Activated CD4-positive, alpha-beta T cell treated with anti-CD3 and anti-CD28 coated beads for 36 hours (primary cell): ENCODE measurements at regions of chr17 and their contacts with region 1.

Region 1: DNA sequence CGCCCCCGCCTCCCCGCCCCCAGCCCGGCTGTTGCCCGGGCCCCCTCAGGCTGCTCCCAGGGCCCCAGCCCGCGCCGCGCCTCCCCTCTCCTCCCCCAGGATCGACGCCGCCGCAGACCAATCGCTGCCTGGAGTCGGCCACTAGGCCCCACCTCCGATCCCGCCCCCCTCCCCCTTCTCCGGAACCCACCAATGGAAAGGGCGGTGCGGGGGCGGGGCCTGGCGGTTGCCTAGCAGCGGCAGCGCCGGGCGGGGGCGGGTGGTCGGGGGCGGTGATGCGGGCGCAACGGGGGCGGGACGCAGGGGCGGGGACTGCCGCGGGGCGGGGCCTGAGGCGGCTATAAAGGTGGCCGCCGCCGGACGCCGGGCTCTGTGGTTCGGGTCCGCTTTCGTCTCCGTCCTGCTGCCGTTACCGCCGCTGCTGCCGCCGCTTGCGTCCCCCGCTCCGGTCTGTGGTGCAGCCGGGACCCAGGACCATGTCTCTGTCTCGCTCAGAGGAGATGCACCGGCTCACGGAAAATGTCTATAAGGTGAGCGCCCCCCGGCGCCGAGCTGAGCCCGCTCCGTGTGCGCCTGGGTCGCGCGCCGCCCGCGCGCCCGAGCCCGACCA is at the start of gene BAIAP2:
- DNase-seq: peak; percentile 99
- ATAC-seq: peak; percentile 91
- H3K4me3 Mint-ChIP-seq: peak within 1 kb of the TSS; percentile 72
- H3K27ac Mint-ChIP-seq: peak within 1 kb of the TSS; percentile 47
- H3K4me1 Mint-ChIP-seq: peaks cover 20% of the 10 kb centered on the region
- H3K27me3 Mint-ChIP-seq: peaks cover 19% of the 10 kb centered on the region
- total RNA-seq, gene BAIAP2: 4.6 to 5.0 TPM

Region 2: DNA sequence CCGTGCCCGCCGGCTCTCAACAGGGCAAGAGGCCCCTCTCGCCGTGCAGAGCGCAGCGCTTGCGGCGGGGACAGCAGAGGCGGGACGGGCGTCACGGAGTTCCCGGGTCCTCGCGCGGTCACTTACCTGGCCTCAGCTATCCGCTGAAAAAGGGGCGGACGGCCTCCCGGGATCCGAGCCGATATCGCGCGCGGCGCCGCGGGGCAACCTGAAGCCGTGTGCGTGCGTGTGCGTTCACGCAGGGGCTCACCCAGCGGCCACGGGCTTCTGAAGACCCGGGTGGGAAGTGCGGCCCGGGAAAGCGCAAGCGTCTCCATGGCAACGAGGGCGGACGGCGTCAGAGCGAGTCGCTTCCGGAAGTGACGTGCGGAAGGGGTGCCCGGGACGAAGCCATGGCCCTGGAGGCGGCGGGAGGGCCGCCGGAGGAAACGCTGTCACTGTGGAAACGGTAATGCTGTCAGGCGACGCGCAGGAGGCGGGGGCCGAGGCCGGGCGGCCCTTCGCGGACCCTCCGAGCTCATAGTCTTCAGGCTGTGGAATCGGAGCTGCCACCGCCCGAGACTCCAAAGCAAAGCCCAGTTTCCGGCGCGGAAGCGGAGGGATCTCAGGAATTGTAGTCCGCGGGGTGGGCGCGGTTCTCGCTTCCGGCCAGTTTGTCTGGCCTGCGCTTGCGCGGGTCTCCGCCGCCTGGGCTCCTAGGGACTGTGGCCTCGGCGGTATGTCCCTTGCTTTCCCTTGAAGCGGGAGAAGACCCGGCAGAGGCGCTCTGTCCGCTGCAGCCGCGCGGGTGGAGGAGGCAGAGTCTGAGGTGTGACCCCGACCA is 619.9 kb before region 1 on chr17 and contains the start of gene ENDOV:
- CTCF ChIA-PET with region 1: no interaction called
- POLR2A ChIA-PET with region 1: no interaction called
- intact Hi-C with region 1: loop called in 1 of 2 experiments (anchors 1 kb)
- DNase-seq: peak; percentile 95
- ATAC-seq: peak; percentile 96
- H3K4me3 Mint-ChIP-seq: peak within 1 kb of the TSS; percentile 81
- H3K27ac Mint-ChIP-seq: peak within 1 kb of the TSS; percentile 8
- H3K4me1 Mint-ChIP-seq: peaks cover 23% of the 10 kb centered on the region
- H3K27me3 Mint-ChIP-seq: peaks cover 16% of the 10 kb centered on the region
- total RNA-seq, gene ENDOV: 12.3 to 13.0 TPM

Region 3: DNA sequence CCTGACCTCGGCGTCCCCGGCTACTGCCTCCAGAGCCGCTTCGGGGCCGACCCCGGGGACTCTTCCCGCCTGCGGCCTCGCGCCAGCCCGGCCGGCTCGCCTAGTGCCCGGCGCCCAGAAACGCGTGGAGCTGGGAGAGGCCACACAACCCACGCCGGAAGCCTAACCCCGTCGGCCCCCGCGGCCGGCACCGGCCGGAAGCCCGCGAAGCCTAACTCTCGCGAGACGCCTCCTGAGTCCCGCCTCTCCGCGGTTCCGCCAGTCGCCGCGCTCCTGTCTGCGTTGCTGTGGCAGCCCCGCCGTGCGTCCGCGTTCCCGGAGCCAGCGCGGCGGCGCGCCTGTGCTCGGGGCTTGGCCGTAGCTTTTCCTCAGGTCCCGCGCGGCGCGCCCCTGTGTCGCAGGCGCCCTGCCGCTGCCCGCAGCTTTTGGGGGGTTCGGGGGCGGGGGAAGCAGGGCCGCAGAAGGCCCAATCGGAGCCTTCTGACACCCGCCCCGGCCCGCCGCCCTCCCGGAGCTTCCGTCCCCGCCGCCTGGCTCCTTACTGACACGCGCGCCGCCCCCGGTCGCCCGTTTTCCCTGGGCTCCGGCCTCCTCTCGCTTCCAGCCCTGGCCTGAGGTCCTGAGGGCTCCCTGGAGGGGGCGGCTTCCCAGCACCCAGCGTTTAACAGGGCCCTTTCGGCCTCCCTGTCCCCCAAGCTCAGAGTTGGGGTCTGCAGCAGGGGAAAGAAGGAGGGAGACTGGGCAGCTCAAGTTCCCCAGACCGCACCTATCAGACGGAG is 580.1 kb before region 1 on chr17:
- CTCF ChIA-PET with region 1: no interaction called
- POLR2A ChIA-PET with region 1: no interaction called
- intact Hi-C with region 1: loop called in 1 of 2 experiments (anchors 1 kb)
- DNase-seq: peak; percentile 98
- ATAC-seq: peak; percentile 93
- H3K4me3 Mint-ChIP-seq: peak overlapping the region; percentile 99
- H3K27ac Mint-ChIP-seq: peak overlapping the region; percentile 94
- H3K4me1 Mint-ChIP-seq: peaks cover 23% of the 10 kb centered on the region
- H3K27me3 Mint-ChIP-seq: peaks cover 13% of the 10 kb centered on the region

Region 4: GRCh38 chr17:80991645-80992076 is 43.2 kb before region 1 on chr17 and contains the start of gene CHMP6:
- CTCF ChIA-PET with region 1: no interaction called
- POLR2A ChIA-PET with region 1: no interaction called
- intact Hi-C with region 1: loop called in 1 of 2 experiments (anchors 2 kb)
- DNase-seq: peak; percentile 83
- ATAC-seq: peak; percentile 49
- H3K4me3 Mint-ChIP-seq: peak within 1 kb of the TSS; percentile 69
- H3K27ac Mint-ChIP-seq: peak within 1 kb of the TSS; percentile 74
- H3K4me1 Mint-ChIP-seq: peaks cover 21% of the 10 kb centered on the region
- H3K27me3 Mint-ChIP-seq: peaks cover 3% of the 10 kb centered on the region
- total RNA-seq, gene CHMP6: 15.9 to 19.4 TPM

Region 5: DNA sequence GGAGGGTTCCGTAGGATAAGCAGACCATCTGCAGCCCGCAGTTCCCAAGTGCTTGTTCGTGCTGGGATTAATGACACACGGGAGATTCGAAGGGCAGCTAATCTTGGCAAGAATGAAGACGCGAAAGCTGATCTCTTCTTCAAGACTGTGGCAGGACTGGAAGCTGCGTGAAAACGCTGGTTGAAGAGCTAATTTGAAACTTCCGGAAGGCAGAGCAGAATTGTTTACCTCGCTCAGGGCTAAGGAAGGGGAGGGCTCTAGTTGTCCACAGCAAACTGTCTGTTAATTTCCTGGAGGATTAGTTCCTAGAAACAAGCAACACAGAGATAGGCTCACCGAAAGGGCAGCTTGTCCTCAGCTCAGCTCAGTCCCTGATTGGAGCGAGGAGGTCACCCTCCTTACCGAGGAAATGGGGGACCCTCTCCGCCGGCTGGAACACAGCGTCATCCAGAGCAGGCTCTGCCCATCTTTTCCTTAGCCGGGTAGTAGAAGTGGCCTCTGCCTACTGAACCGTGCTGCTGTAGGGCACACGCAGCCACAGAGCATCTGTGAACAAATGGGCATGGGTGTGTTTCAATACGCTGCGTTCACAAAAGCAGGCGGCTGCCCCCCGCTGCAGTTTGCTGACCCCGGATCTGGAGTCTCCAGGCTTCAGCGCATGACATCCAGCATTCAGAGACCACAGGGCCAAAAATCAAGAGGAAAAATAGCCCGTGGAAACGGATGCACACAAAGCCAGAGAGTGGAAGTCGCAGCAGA is 16.7 kb before region 1 on chr17:
- CTCF ChIA-PET with region 1: interaction called, 9 read pairs
- POLR2A ChIA-PET with region 1: no interaction called
- intact Hi-C with region 1: loop called in 1 of 2 experiments (anchors 1 kb)
- DNase-seq: peak; percentile 54
- ATAC-seq: peak; percentile 84
- H3K4me3 Mint-ChIP-seq: peak overlapping the region; percentile 64
- H3K27ac Mint-ChIP-seq: peak overlapping the region; percentile 87
- H3K4me1 Mint-ChIP-seq: peaks cover 17% of the 10 kb centered on the region
- H3K27me3 Mint-ChIP-seq: no peaks in the 10 kb centered on the region

Region 6: GRCh38 chr17:81094509-81095382 is 59.9 kb after region 1 on chr17:
- CTCF ChIA-PET with region 1: interaction called, 4 read pairs
- POLR2A ChIA-PET with region 1: no interaction called
- intact Hi-C with region 1: loop called in 1 of 2 experiments (anchors 1 kb)
- DNase-seq: peak; percentile 95
- ATAC-seq: peak; percentile 95
- H3K4me3 Mint-ChIP-seq: peak overlapping the region; percentile 26
- H3K27ac Mint-ChIP-seq: peak overlapping the region; percentile 60
- H3K4me1 Mint-ChIP-seq: peaks cover 43% of the 10 kb centered on the region
- H3K27me3 Mint-ChIP-seq: no peaks in the 10 kb centered on the region

Region 7: GRCh38 chr17:81119223-81120148 is 84.6 kb after region 1 on chr17:
- CTCF ChIA-PET with region 1: no interaction called
- POLR2A ChIA-PET with region 1: no interaction called
- intact Hi-C with region 1: loop called in 1 of 2 experiments (anchors 1 kb)
- DNase-seq: peak; percentile 95
- ATAC-seq: peak; percentile 82
- H3K4me3 Mint-ChIP-seq: peak overlapping the region; percentile 37
- H3K27ac Mint-ChIP-seq: no peak overlapping the region
- H3K4me1 Mint-ChIP-seq: no peaks in the 10 kb centered on the region
- H3K27me3 Mint-ChIP-seq: no peaks in the 10 kb centered on the region